Activated naive CD4-positive, alpha-beta T cell treated with anti-CD3 and anti-CD28 coated beads for 36 hours (primary cell): ENCODE measurements at regions of chr11 and their contacts with region 1.

Region 1: GRCh38 chr11:121520243-121521144 is 67.7 kb upstream of the SORL1-AS1 start:
- DNase-seq: no peak
- H3K4me3 Mint-ChIP-seq: no peak overlapping the region
- H3K27ac Mint-ChIP-seq: peak overlapping the region; percentile 39
- H3K4me1 Mint-ChIP-seq: peaks cover 43% of the 10 kb centered on the region
- H3K27me3 Mint-ChIP-seq: no peaks in the 10 kb centered on the region

Region 2: DNA sequence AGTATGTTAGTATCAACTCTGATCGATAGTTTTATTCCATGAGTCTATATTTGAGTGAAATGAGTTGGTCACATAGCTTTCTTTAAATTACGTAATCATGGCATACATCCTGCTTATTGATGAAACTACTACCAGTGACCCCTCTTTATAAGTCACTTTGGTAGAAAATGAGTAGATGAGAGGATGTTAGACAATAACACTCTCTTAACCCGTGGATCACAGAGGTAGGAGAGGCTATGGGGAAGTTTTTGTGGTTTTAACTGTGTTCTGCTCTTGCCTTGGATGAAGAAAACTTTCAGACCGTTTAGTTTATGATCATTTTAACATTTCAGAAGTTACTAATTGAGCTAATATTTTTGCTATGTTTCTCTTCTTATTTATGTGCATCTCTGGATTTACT is 462.6 kb before region 1 on chr11:
- CTCF ChIA-PET with region 1: no interaction called
- intact Hi-C with region 1: no loop called
- DNase-seq: no peak
- H3K4me3 Mint-ChIP-seq: no peak overlapping the region
- H3K27ac Mint-ChIP-seq: no peak overlapping the region
- H3K4me1 Mint-ChIP-seq: no peaks in the 10 kb centered on the region
- H3K27me3 Mint-ChIP-seq: no peaks in the 10 kb centered on the region

Region 3: GRCh38 chr11:121431820-121432526 is 88.5 kb before region 1 on chr11:
- CTCF ChIA-PET with region 1: no interaction called
- intact Hi-C with region 1: loop called (anchors 1 kb)
- DNase-seq: no peak
- H3K4me3 Mint-ChIP-seq: no peak overlapping the region
- H3K27ac Mint-ChIP-seq: no peak overlapping the region
- H3K4me1 Mint-ChIP-seq: peaks cover 45% of the 10 kb centered on the region
- H3K27me3 Mint-ChIP-seq: no peaks in the 10 kb centered on the region

Region 4: DNA sequence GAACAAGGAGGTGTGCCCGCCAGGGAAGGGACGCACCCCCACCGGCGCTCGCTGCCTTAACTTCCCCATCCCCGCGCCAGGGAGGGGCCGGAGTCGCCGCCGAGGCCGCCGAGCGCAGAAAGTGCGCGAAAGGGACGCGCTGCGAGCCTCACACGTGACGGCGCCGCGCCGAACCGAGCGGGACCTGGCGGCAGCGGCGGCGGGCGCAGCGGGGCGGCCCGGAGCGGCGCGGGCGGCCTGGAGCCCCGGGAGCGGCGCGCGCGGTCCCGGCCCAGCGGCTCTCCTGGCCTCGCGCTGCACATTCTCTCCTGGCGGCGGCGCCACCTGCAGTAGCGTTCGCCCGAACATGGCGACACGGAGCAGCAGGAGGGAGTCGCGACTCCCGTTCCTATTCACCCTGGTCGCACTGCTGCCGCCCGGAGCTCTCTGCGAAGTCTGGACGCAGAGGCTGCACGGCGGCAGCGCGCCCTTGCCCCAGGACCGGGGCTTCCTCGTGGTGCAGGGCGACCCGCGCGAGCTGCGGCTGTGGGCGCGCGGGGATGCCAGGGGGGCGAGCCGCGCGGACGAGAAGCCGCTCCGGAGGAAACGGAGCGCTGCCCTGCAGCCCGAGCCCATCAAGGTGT is 68.4 kb before region 1 on chr11 and contains the start of gene SORL1:
- CTCF ChIA-PET with region 1: interaction called, 4 read pairs
- intact Hi-C with region 1: loop called (anchors 1 kb)
- DNase-seq: peak; percentile 86
- H3K4me3 Mint-ChIP-seq: peak within 1 kb of the TSS; percentile 87
- H3K27ac Mint-ChIP-seq: peak within 1 kb of the TSS; percentile 92
- H3K4me1 Mint-ChIP-seq: peaks cover 81% of the 10 kb centered on the region
- H3K27me3 Mint-ChIP-seq: no peaks in the 10 kb centered on the region
- total RNA-seq, gene SORL1: 66.8 to 67.2 TPM

Region 5: GRCh38 chr11:121482231-121483129 is 38.0 kb before region 1 on chr11:
- CTCF ChIA-PET with region 1: no interaction called
- intact Hi-C with region 1: loop called (anchors 1 kb)
- DNase-seq: peak; percentile 80
- H3K4me3 Mint-ChIP-seq: peak overlapping the region; percentile 88
- H3K27ac Mint-ChIP-seq: peak overlapping the region; percentile 98
- H3K4me1 Mint-ChIP-seq: peaks cover 39% of the 10 kb centered on the region
- H3K27me3 Mint-ChIP-seq: no peaks in the 10 kb centered on the region

Region 6: GRCh38 chr11:121494355-121495099 is 26.0 kb before region 1 on chr11:
- CTCF ChIA-PET with region 1: no interaction called
- intact Hi-C with region 1: loop called (anchors 2 kb)
- DNase-seq: peak; percentile 77
- H3K4me3 Mint-ChIP-seq: peak overlapping the region; percentile 38
- H3K27ac Mint-ChIP-seq: peak overlapping the region; percentile 79
- H3K4me1 Mint-ChIP-seq: peaks cover 57% of the 10 kb centered on the region
- H3K27me3 Mint-ChIP-seq: no peaks in the 10 kb centered on the region

Region 7: DNA sequence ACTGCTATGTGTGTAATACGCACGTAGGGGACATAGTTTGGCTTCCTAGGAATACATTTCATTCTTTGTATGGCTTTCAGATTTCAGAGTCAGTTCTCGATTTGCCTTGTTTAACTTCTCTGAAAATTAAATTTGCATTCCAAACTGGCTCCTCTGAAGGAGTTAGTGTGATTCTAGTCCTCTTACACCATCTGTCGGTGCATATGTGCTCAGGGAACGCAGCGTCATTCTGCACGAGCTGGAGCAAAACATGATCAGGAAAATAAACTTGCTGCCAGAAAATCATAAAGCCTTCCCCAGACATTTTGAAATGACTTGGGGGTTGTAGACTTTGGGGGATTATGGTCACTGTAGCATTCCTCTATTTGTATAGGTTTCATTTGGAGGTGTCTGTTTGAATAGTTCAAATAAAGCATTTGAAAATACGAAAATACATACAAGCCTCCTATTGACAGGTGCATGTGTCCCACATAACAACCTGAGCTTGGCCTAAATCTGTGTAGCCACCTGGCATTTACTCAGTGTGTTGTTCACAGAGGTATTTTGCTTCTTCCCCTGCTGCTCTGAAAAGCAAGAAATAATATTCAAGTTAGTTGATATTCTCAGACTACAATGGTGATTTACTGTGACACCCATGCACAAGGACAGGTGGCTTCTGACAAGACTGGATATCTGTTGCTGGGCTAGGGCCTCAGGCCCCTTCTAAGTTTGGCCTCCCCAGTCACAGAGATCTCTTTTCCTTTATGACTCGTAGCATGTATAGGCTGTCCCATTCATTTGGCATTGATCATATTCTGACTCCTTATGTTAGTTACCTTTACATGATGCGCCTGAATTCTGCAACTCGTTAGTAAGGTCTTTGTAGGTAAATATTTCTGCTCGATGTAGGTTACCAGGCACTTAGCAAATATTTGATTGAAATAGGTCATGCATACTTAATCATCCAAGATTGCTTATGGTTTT is 13.9 kb after region 1 on chr11:
- CTCF ChIA-PET with region 1: interaction called, 3 read pairs
- intact Hi-C with region 1: loop called (anchors 1 kb)
- DNase-seq: no peak
- H3K4me3 Mint-ChIP-seq: no peak overlapping the region
- H3K27ac Mint-ChIP-seq: no peak overlapping the region
- H3K4me1 Mint-ChIP-seq: peaks cover 60% of the 10 kb centered on the region
- H3K27me3 Mint-ChIP-seq: no peaks in the 10 kb centered on the region

Region 8: GRCh38 chr11:121688055-121688491 is 167.6 kb after region 1 on chr11:
- CTCF ChIA-PET with region 1: no interaction called
- intact Hi-C with region 1: no loop called
- DNase-seq: no peak
- H3K4me3 Mint-ChIP-seq: no peak overlapping the region
- H3K27ac Mint-ChIP-seq: no peak overlapping the region
- H3K4me1 Mint-ChIP-seq: no peaks in the 10 kb centered on the region
- H3K27me3 Mint-ChIP-seq: no peaks in the 10 kb centered on the region

Region 9: DNA sequence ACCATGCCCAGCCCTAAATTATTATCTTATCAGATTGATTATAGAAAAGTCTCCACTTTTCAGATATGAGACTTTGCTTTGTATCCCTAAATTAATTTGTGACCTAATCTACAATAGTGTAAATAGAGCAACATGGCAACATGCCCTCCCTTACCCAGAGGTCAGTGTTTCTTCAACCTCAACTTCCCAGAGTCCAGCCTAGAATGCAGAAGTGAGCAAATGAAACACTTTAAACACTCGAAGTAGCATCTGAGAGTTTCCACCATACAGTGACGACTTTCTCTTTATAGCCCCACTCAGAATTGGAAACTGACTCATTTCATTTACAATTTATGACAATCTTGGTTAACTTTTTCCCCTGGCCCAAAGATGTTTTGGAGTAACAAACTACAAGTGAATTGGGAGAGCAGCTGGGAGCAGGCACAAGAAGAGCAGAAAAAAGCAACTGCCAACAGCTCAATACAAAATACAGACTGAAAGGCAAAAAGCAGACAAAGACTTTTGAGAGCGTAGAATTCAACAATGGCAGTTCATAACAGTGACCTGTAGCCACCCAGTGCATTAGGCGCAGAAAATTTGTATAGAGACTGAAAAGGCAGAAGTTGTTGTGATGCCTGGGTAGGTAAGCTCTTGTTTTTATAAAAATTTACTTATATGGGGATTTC is 605.7 kb after region 1 on chr11:
- CTCF ChIA-PET with region 1: no interaction called
- intact Hi-C with region 1: no loop called
- DNase-seq: no peak
- H3K4me3 Mint-ChIP-seq: no peak overlapping the region
- H3K27ac Mint-ChIP-seq: no peak overlapping the region
- H3K4me1 Mint-ChIP-seq: no peaks in the 10 kb centered on the region
- H3K27me3 Mint-ChIP-seq: peaks cover 9% of the 10 kb centered on the region